Activated B cell treated with CpG ODN at 0.5 μM for 24 hours (primary cell): ENCODE measurements at regions of chr13 and their contacts with region 1.

Region 1: GRCh38 chr13:30802953-30803478 is 67.7 kb downstream of the ALOX5AP start:
- DNase-seq: peak; percentile 73
- ATAC-seq: peak; percentile 98
- H3K4me3 Mint-ChIP-seq: peak overlapping the region; percentile 73
- H3K27ac Mint-ChIP-seq: no peak overlapping the region
- H3K4me1 Mint-ChIP-seq: peaks cover 11% of the 10 kb centered on the region
- H3K27me3 Mint-ChIP-seq: no peaks in the 10 kb centered on the region
- CTCF ChIP-seq: peak; percentile 90

Region 2: DNA sequence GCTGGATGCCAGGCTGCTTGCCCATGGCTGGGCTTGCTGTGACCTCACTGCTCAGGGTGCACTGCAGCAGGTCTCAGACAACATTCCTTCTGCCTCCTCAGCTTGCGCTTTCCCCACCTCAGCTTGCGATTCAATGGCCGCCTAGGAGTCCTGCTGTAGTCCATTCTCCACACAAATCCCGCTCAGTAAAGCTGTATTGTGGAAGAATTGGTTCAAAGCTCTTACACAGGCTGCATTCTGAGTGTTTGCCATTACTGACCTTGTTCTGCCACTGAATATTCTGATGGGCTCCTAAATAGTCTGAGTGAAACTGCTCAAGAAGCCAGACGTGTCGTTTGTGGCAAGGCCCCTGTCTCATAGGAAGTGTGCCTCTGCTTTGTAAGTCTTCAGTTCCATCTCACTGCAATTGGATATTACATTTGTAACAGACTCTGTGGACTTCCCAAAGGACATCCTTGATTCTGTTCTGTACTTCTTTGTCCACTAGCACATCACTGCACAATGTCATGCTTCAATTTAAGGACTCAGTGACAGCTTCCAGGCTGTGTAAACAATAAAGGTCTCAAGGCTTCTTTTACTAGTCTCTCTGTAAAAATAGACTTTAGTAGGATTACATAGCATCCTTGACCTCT is 545.4 kb before region 1 on chr13:
- CTCF ChIA-PET with region 1: no interaction called
- POLR2A ChIA-PET with region 1: no interaction called
- intact Hi-C with region 1: loop called (anchors 1 kb)
- DNase-seq: no peak
- ATAC-seq: no peak
- H3K4me3 Mint-ChIP-seq: no peak overlapping the region
- H3K27ac Mint-ChIP-seq: no peak overlapping the region
- H3K4me1 Mint-ChIP-seq: peaks cover 12% of the 10 kb centered on the region
- H3K27me3 Mint-ChIP-seq: no peaks in the 10 kb centered on the region
- CTCF ChIP-seq: no peak

Region 3: GRCh38 chr13:30408319-30409101 is 394.5 kb before region 1 on chr13:
- CTCF ChIA-PET with region 1: no interaction called
- POLR2A ChIA-PET with region 1: no interaction called
- intact Hi-C with region 1: loop called (anchors 2 kb)
- DNase-seq: peak; percentile 85
- ATAC-seq: peak; percentile 94
- H3K4me3 Mint-ChIP-seq: peak overlapping the region; percentile 62
- H3K27ac Mint-ChIP-seq: peak overlapping the region; percentile 79
- H3K4me1 Mint-ChIP-seq: peaks cover 53% of the 10 kb centered on the region
- H3K27me3 Mint-ChIP-seq: no peaks in the 10 kb centered on the region
- CTCF ChIP-seq: no peak

Region 4: GRCh38 chr13:30572859-30573275 is 230.1 kb before region 1 on chr13:
- CTCF ChIA-PET with region 1: interaction called, 3 read pairs
- POLR2A ChIA-PET with region 1: no interaction called
- intact Hi-C with region 1: loop called (anchors 2 kb)
- DNase-seq: no peak
- ATAC-seq: peak; percentile 83
- H3K4me3 Mint-ChIP-seq: peak overlapping the region; percentile 64
- H3K27ac Mint-ChIP-seq: peak overlapping the region; percentile 71
- H3K4me1 Mint-ChIP-seq: peaks cover 23% of the 10 kb centered on the region
- H3K27me3 Mint-ChIP-seq: no peaks in the 10 kb centered on the region
- CTCF ChIP-seq: no peak

Region 5: DNA sequence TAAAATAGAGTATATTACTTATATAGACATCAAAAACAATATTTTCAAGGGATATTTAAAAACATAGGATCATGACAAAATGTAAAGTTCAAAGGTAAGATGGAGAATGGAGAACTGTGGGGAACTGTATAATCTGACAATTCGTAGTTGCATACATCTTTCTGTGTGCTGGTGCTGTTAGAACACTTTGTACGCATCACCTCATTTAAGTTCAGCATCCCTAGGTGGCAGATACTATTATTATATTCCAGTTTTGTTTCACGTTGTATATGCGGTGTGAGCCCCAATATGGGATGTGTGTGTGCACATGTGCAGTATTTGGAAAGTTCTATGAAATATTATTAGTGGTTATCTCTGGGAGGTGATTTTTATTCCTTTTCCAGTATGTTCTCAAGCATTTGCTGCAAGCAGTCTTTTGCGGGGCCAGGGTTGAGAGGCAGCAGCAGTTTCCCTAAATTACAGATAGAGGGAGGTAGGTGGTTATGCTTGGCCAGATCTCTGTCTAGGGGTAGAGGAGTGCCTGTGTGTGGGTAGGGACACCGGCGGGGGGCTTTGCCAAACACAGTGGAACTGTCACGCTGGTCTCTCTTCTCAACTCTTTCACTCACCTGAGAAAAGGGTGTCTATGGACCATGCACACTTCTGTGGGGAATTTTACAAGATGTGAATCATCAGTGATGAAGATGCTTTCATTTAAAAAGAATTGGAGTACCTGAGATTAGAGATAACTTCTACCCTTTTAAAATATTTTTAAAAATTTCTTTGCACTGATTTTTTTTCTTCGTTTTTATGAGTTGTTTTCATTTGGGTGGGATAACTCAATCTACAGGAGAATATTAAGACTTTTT is 123.3 kb before region 1 on chr13:
- CTCF ChIA-PET with region 1: interaction called, 6 read pairs
- POLR2A ChIA-PET with region 1: no interaction called
- intact Hi-C with region 1: loop called (anchors 1 kb)
- DNase-seq: no peak
- ATAC-seq: peak; percentile 96
- H3K4me3 Mint-ChIP-seq: no peak overlapping the region
- H3K27ac Mint-ChIP-seq: peak overlapping the region; percentile 20
- H3K4me1 Mint-ChIP-seq: peaks cover 15% of the 10 kb centered on the region
- H3K27me3 Mint-ChIP-seq: no peaks in the 10 kb centered on the region
- CTCF ChIP-seq: no peak